ENCODE measurements at regions of chr2 and their contacts with region 1.

Region 1: DNA sequence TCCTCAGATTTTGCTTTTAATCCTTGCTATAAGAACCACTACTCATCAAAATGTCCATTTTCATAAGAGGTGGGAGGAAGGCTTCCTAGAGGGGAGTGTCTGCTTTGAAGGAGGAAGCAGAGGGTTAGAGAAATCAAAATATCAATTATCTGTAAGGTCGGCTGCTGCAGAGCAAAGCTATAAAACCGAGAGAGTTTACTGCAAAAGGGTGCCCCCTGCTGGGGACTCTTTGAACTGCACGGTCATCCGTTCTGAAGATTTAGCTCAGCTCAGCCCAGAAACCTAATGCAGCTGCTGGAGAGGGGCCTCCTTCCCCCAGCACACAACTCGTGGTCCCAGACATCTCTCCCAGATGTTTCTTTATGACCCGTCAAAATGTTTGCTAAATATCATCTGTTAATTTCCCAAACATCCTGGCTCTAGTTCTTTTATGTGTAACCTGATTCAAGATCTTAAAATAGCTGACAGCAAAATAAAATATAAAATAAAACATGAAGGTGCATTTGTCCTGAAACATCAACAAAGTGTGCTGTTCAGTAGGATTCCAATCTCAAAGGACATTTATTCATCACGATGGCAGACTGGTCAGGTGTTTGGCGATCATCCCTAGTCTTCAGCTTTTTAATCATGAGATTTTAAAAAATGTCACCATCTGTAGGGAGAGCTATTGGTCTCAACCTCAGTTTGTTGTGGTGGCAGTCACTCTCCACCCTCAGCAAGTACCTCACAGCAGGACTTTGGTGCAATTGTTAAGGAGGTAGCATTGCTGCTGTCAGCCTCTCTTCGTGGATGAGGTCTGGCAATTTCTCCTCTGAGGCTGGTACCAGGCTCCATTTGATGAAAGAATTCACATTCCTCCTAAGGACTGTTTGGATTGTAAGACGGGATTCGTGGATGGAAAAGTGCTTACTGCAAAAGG is 185.9 kb downstream of the MTX2 start:
- DNase-seq: peak; percentile 91
- H3K4me3 ChIP-seq: no peak overlapping the region
- H3K27ac ChIP-seq: peak overlapping the region; percentile 25 to 68 (median 51)
- H3K4me1 ChIP-seq: peaks cover 0 to 7% (median 3%) of the 10 kb centered on the region in 4 donors
- H3K27me3 ChIP-seq: no peaks in the 10 kb centered on the region
- CTCF ChIP-seq: peak; percentile 89 to 96 (median 95)
- EP300 ChIP-seq: no peak
- POLR2A ChIP-seq: no peak

Region 2: GRCh38 chr2:176554101-176555048 is 99.2 kb after region 1 on chr2:
- in situ Hi-C with region 1: no loop called
- intact Hi-C with region 1: loop called (anchors 5 kb)
- DNase-seq: peak; percentile 25
- H3K4me3 ChIP-seq: peak overlapping the region; percentile 25 to 47 (median 37)
- H3K27ac ChIP-seq: peak overlapping the region; percentile 72 to 85 (median 76)
- H3K4me1 ChIP-seq: peaks cover 4 to 24% (median 9%) of the 10 kb centered on the region in 4 donors
- H3K27me3 ChIP-seq: no peaks in the 10 kb centered on the region
- CTCF ChIP-seq: peak; percentile 78 to 86 (median 82)
- EP300 ChIP-seq: no peak
- POLR2A ChIP-seq: no peak

Region 3: DNA sequence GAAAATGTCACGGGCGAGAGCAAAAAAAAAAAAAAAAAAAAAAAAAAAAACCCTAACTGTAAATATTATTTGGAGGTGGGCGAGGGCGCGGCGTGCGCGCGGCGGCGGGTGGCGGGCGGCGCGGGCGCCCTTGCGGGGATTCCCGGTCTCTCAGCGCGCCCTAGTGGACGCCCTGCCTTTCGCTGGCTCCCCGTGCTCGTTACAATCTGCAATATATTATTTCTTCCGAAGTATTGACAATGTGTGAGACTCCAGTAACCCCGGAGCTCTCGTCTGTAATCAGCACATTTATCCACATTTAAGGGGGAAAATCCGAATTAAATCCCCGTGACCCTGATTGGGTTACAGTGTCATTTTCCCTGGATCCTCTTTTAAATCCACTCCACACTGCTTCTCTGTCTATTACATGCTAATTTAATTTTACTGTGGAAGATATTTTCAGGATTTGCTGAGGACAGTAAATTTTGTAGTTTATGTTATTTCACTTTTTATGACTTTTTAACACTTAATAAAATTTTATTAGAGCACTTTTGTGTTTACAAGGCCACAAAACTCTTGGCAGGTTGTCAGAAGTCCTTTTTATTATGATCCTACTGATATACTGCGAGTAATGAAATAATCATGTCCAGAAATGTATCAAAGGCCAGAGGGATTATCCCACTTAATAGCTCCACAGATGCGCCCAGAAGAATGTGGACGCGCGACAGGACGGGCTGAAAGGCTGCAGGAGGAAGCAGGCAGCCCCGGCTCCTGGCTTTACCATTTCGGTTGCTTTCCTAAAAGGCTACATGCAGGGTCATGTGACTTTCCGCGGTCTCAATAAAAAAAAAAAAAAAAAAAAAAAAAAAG is 183.2 kb after region 1 on chr2:
- in situ Hi-C with region 1: loop called in 3 of 4 experiments (anchors 10 to 25 kb)
- intact Hi-C with region 1: loop called (anchors 10 kb)
- DNase-seq: peak; percentile 77
- H3K4me3 ChIP-seq: peak overlapping the region; percentile 69 to 81 (median 78)
- H3K27ac ChIP-seq: peak overlapping the region; percentile 80 to 85 (median 82)
- H3K4me1 ChIP-seq: peaks cover 0 to 9% (median 5%) of the 10 kb centered on the region in 4 donors
- H3K27me3 ChIP-seq: peaks cover 39% of the 10 kb centered on the region
- CTCF ChIP-seq: peak; percentile 35 to 78 (median 69)
- EP300 ChIP-seq: no peak
- POLR2A ChIP-seq: no peak

Region 4: GRCh38 chr2:176814306-176815052 is 359.3 kb after region 1 on chr2:
- in situ Hi-C with region 1: loop called in 1 of 4 experiments (anchors 25 kb)
- intact Hi-C with region 1: no loop called
- DNase-seq: no peak
- H3K4me3 ChIP-seq: no peak overlapping the region
- H3K27ac ChIP-seq: no peak overlapping the region
- H3K4me1 ChIP-seq: no peaks in the 10 kb centered on the region
- H3K27me3 ChIP-seq: no peaks in the 10 kb centered on the region
- CTCF ChIP-seq: peak; percentile 58 to 71 (median 60)
- EP300 ChIP-seq: no peak
- POLR2A ChIP-seq: no peak